ENCODE measurements at regions of chr1 and their contacts with region 1.

Region 1: DNA sequence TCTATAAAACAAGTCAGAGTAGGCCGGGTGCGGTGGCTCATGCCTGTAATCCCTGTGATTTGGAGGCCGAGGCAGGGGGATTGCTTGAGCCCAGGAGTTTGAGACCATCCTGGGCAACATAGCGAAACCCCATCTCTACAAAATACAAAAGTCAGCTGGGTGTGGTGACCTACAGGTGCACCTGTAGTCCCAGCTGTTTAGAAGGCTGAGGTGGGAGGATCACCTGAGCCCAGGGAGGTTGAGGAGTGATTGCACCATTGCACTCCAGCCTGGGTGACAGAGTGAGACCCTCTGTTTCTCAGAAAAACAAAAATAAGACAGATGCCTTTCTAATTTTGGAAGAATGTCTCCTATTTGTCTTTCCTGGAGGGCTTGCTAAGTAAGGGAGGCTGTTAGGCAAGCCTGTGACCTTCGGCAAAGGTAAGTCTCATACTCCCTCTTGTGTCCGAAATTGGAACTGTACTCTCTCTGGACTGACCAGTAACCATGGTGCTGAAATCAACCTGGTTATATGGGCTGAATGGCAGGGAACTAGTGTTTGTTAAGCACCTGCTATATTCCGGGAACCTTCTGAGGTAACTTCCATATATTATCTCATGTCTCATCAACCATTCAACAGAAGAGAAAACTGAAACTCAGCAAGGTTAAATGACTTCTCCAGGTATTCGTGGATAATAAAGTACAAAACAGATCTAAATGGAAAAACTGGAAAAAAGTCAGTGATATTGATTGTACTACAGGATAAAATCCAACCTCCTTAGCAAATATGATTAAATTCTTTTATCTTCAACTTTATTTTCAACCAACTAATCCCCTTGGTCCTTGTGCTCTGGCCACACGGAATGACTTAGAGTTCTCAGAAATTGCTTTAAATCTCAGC is 11.8 kb upstream of the RAB3B start:
- DNase-seq: no peak
- ATAC-seq: peak; percentile 88
- H3K4me3 ChIP-seq: no peak overlapping the region
- H3K27ac ChIP-seq: no peak overlapping the region
- H3K4me1 ChIP-seq: peaks cover under 1 to 1% of the 10 kb centered on the region in 2 donors
- H3K27me3 ChIP-seq: no peaks in the 10 kb centered on the region

Region 2: DNA sequence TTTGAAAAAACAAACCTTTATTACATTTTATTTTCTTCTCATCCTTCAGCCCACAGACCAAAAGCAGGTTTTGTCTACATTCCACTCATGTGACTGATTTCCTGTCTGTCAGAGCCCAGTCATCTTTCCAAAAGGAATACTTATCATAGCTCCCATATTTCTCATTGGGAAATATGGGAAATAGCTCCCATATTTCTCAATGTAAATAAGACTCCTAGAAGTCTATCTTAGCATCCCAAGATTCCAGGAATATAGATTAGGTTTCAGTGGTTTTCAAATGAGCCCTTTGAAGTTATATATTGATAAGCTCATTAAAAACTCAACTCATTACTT is 104.6 kb before region 1 on chr1:
- intact Hi-C with region 1: loop called (anchors 2 to 5 kb)
- DNase-seq: no peak
- ATAC-seq: no peak
- H3K4me3 ChIP-seq: no peak overlapping the region
- H3K27ac ChIP-seq: no peak overlapping the region
- H3K4me1 ChIP-seq: no peaks in the 10 kb centered on the region
- H3K27me3 ChIP-seq: no peaks in the 10 kb centered on the region